CD8-positive, alpha-beta T cell (primary cell): ENCODE measurements at regions of chr14 and their contacts with region 1.

Region 1: DNA sequence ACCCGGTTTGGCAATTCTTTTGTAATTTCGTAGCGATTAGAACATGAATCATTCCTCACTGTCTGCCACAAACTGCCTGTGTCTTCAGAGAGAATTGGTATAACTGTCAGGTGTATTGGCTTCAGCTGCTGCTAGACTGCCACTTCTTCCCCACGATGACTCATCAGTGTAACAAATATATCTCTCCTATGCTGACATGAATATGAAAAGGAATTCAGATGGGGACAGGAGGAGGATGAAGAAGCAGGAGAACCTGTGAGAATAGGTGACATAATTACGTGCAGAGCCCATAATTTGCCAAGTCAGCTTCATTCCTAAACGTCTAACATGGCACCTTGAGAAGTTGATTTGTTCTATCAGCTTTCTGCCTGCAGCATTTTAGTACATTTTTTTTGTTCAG is 64.9 kb downstream of the FRMD6 start:
- DNase-seq: no peak
- ATAC-seq: no peak
- H3K4me3 ChIP-seq: no peak overlapping the region
- H3K4me3 Mint-ChIP-seq: no peak overlapping the region
- H3K27ac ChIP-seq: no peak overlapping the region
- H3K27ac Mint-ChIP-seq: no peak overlapping the region
- H3K4me1 ChIP-seq: no peaks in the 10 kb centered on the region
- H3K4me1 Mint-ChIP-seq: no peaks in the 10 kb centered on the region
- H3K27me3 ChIP-seq: no peaks in the 10 kb centered on the region
- H3K27me3 Mint-ChIP-seq: no peaks in the 10 kb centered on the region
- CTCF ChIP-seq: no peak

Region 2: DNA sequence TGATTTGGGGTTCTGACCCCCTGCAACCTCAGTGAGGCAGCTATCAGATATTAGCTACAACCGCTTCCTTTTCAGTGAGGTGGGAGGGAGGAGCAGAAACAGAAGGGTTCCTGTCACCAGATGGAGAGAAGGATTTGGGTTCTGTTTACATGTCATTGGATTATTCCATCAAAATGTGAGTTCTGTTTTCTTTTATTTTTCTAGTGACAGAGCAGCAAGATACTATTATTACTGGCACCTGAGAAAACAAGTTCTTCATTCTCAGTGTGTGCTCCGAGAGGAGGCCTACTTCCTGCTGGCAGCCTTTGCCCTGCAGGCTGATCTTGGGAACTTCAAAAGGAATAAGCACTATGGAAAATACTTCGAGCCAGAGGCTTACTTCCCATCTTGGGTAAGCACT is 12.1 kb before region 1 on chr14:
- CTCF ChIA-PET with region 1: no interaction called
- POLR2A ChIA-PET with region 1: no interaction called
- intact Hi-C with region 1: no loop called
- DNase-seq: no peak
- ATAC-seq: no peak
- H3K4me3 ChIP-seq: no peak overlapping the region
- H3K4me3 Mint-ChIP-seq: no peak overlapping the region
- H3K27ac ChIP-seq: no peak overlapping the region
- H3K27ac Mint-ChIP-seq: no peak overlapping the region
- H3K4me1 ChIP-seq: no peaks in the 10 kb centered on the region
- H3K4me1 Mint-ChIP-seq: no peaks in the 10 kb centered on the region
- H3K27me3 ChIP-seq: no peaks in the 10 kb centered on the region
- H3K27me3 Mint-ChIP-seq: no peaks in the 10 kb centered on the region
- CTCF ChIP-seq: no peak

Region 3: DNA sequence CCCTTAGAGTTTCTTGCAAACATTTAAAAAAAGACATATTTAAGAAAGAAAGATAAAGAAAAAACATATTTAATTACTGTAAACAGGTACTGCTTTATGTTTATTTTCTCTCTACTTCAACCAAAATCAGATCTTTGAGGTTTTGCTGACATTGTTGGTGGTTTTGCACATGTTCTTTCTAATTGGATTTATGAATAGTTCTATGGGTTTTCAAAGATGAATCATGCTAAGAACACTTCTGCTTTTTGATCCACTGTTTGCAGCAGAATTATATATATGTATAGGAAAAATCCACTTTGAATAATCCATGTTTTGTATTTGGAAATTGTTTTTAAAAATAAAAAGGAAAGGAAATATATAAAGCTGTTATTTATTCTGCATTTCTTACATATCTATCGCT is 13.5 kb after region 1 on chr14:
- CTCF ChIA-PET with region 1: no interaction called
- POLR2A ChIA-PET with region 1: no interaction called
- intact Hi-C with region 1: loop called in 1 of 2 experiments (anchors 1 kb)
- DNase-seq: no peak
- ATAC-seq: no peak
- H3K4me3 ChIP-seq: no peak overlapping the region
- H3K4me3 Mint-ChIP-seq: no peak overlapping the region
- H3K27ac ChIP-seq: no peak overlapping the region
- H3K27ac Mint-ChIP-seq: no peak overlapping the region
- H3K4me1 ChIP-seq: no peaks in the 10 kb centered on the region
- H3K4me1 Mint-ChIP-seq: no peaks in the 10 kb centered on the region
- H3K27me3 ChIP-seq: no peaks in the 10 kb centered on the region
- H3K27me3 Mint-ChIP-seq: peaks cover 13% of the 10 kb centered on the region
- CTCF ChIP-seq: no peak